CD8-positive, alpha-beta T cell (primary cell): ENCODE measurements at regions of chr12 and their contacts with region 1.

Region 1: DNA sequence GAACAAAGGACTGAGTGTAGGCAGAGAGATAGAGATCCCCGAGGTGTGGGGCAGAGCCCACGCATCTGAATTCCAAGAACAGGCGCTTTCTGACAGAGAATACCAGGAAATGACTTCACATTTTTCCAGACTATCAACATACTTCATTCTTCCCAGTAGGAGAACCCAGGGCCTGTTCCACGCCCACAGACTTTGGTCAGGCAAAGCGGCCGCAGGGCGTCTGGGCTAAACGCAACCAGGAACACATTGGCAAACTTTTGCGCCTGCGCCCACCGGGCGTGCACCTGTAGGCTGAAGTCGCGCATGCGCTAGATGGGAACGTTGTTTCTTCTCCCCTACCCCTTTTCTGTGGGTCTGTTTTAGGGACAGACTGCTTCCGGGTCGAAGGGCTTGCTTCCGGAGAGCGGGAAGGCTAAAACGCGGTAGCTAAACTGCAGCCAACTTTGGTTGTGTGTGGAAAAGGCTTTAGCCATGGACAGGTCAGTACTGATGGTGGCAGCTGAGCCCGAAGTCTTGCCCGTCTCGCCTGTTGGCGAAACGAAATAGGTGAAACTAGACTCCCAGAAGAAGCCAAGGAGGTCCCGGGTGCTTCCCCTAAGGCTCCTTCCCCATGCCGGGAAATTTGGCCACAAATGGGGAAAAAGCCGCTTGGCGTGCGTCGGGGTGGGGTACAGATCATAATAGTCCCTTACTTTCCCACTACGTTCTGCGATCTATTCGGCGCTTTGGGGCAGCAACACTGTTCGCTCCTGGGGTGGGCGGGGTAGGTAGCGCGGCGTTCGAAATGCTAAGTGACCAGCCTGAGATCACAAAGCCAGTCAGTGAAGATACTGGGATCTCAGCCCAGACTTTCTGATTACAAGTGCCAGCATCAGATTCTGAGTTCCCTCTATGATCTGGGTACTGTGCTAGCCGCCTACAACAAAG is at the start of gene NUP107:
- DNase-seq: peak; percentile 95 to 99 (median 98)
- ATAC-seq: peak; percentile 96
- H3K4me3 ChIP-seq: peak within 1 kb of the TSS; percentile 91
- H3K4me3 Mint-ChIP-seq: peak within 1 kb of the TSS; percentile 99
- H3K27ac ChIP-seq: peak within 1 kb of the TSS; percentile 73 to 78
- H3K27ac Mint-ChIP-seq: peak within 1 kb of the TSS; percentile 100
- H3K4me1 ChIP-seq: peaks cover 24% of the 10 kb centered on the region
- H3K4me1 Mint-ChIP-seq: peaks cover 41% of the 10 kb centered on the region
- H3K27me3 ChIP-seq: no peaks in the 10 kb centered on the region
- H3K27me3 Mint-ChIP-seq: no peaks in the 10 kb centered on the region
- CTCF ChIP-seq: no peak
- total RNA-seq, gene NUP107: 40.1 to 45.9 TPM

Region 2: GRCh38 chr12:68294251-68294650 is 392.6 kb before region 1 on chr12:
- CTCF ChIA-PET with region 1: no interaction called
- POLR2A ChIA-PET with region 1: no interaction called
- intact Hi-C with region 1: no loop called
- DNase-seq: no peak
- ATAC-seq: no peak
- H3K4me3 ChIP-seq: no peak overlapping the region
- H3K4me3 Mint-ChIP-seq: no peak overlapping the region
- H3K27ac ChIP-seq: no peak overlapping the region
- H3K27ac Mint-ChIP-seq: no peak overlapping the region
- H3K4me1 ChIP-seq: no peaks in the 10 kb centered on the region
- H3K4me1 Mint-ChIP-seq: peaks cover 9% of the 10 kb centered on the region
- H3K27me3 ChIP-seq: no peaks in the 10 kb centered on the region
- H3K27me3 Mint-ChIP-seq: no peaks in the 10 kb centered on the region
- CTCF ChIP-seq: no peak

Region 3: GRCh38 chr12:68331869-68332727 is 354.8 kb before region 1 on chr12 and contains the start of gene MDM1:
- CTCF ChIA-PET with region 1: no interaction called
- POLR2A ChIA-PET with region 1: no interaction called
- intact Hi-C with region 1: loop called in 1 of 2 experiments (anchors 1 kb)
- DNase-seq: peak; percentile 88 to 99 (median 96)
- ATAC-seq: peak; percentile 95
- H3K4me3 ChIP-seq: peak within 1 kb of the TSS; percentile 56 to 71
- H3K4me3 Mint-ChIP-seq: peak within 1 kb of the TSS; percentile 88
- H3K27ac ChIP-seq: peak within 1 kb of the TSS; percentile 45 to 46
- H3K27ac Mint-ChIP-seq: peak within 1 kb of the TSS; percentile 89
- H3K4me1 ChIP-seq: peaks cover 24% of the 10 kb centered on the region
- H3K4me1 Mint-ChIP-seq: peaks cover 49% of the 10 kb centered on the region
- H3K27me3 ChIP-seq: no peaks in the 10 kb centered on the region
- H3K27me3 Mint-ChIP-seq: no peaks in the 10 kb centered on the region
- CTCF ChIP-seq: no peak
- total RNA-seq, gene MDM1: 10.6 to 12.0 TPM

Region 4: GRCh38 chr12:68358532-68359485 is 328.0 kb before region 1 on chr12:
- CTCF ChIA-PET with region 1: interaction called, 4 read pairs
- POLR2A ChIA-PET with region 1: interaction called, 4 read pairs
- intact Hi-C with region 1: loop called (anchors 1 to 2 kb)
- DNase-seq: peak; percentile 46 to 85 (median 68)
- ATAC-seq: peak; percentile 93
- H3K4me3 ChIP-seq: no peak overlapping the region
- H3K4me3 Mint-ChIP-seq: no peak overlapping the region
- H3K27ac ChIP-seq: no peak overlapping the region
- H3K27ac Mint-ChIP-seq: peak overlapping the region; percentile 29
- H3K4me1 ChIP-seq: peaks cover 14% of the 10 kb centered on the region
- H3K4me1 Mint-ChIP-seq: peaks cover 31% of the 10 kb centered on the region
- H3K27me3 ChIP-seq: no peaks in the 10 kb centered on the region
- H3K27me3 Mint-ChIP-seq: no peaks in the 10 kb centered on the region
- CTCF ChIP-seq: peak; percentile 64

Region 5: DNA sequence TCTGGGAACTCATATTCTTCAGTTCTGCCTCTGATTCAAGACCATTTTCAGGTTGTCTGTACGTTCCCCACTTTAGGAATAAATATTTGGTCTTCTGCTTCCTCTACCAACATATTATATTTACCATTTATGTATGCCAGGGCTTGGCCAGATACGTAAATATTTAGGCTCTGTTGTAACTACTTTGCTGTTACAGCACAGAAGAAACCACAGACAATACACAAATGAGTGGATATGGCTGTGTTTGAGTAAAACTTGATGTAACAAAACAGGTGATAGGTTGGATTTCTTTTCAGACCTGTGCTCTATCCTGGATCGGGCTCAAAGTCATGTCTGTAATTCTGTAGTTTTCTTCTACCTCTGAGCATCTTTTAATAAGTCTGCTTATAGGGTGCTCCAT is 38.7 kb before region 1 on chr12:
- CTCF ChIA-PET with region 1: no interaction called
- POLR2A ChIA-PET with region 1: interaction called, 4 read pairs
- intact Hi-C with region 1: loop called in 1 of 2 experiments (anchors 5 kb)
- DNase-seq: peak in 1 of 9 experiments; percentile 32
- ATAC-seq: peak; percentile 27
- H3K4me3 ChIP-seq: no peak overlapping the region
- H3K4me3 Mint-ChIP-seq: peak overlapping the region; percentile 2
- H3K27ac ChIP-seq: peak overlapping the region in 1 of 2 experiments; percentile 58
- H3K27ac Mint-ChIP-seq: peak overlapping the region; percentile 55
- H3K4me1 ChIP-seq: peaks cover 42% of the 10 kb centered on the region
- H3K4me1 Mint-ChIP-seq: peaks cover 67% of the 10 kb centered on the region
- H3K27me3 ChIP-seq: no peaks in the 10 kb centered on the region
- H3K27me3 Mint-ChIP-seq: no peaks in the 10 kb centered on the region
- CTCF ChIP-seq: no peak

Region 6: DNA sequence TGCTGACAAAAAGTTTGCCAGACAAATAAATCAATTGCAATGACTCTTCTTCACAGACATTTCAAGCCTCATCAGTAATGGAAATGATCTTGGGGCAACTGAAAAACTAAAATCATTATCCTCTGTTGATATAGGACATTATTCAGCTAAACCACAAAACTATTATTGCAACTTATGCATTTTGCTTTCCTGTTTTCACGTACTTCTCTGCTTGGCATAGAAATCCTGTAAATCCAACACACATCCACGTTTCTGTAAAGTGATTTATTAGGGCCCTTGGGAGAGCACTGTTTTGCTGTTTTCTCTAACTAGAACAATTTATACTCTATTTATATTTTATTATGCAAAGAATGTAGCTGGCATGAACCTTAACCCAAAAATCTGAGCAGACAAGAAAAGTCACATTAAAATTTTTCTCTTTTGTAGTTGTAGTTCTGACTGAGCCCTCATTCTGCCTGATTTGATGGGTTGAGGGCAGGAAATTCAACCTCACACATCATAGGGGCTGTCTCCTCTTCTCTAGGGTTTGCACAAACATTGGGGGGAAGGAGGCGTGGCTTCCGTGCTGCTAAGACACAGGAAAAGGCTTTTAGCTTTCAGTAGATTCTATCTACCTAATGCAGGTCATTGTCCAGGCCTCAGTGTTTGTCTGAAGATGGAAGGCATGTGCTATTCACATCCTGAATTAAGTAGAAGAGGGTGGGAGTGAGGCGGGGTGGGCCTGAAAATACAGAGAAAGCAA is 11.6 kb before region 1 on chr12:
- CTCF ChIA-PET with region 1: no interaction called
- POLR2A ChIA-PET with region 1: interaction called, 9 read pairs
- intact Hi-C with region 1: loop called in 1 of 2 experiments (anchors 1 kb)
- DNase-seq: peak; percentile 53 to 93 (median 84)
- ATAC-seq: peak; percentile 99
- H3K4me3 ChIP-seq: peak overlapping the region; percentile 4 to 47
- H3K4me3 Mint-ChIP-seq: peak overlapping the region; percentile 56
- H3K27ac ChIP-seq: peak overlapping the region; percentile 40 to 68
- H3K27ac Mint-ChIP-seq: peak overlapping the region; percentile 86
- H3K4me1 ChIP-seq: peaks cover 47% of the 10 kb centered on the region
- H3K4me1 Mint-ChIP-seq: peaks cover 60% of the 10 kb centered on the region
- H3K27me3 ChIP-seq: no peaks in the 10 kb centered on the region
- H3K27me3 Mint-ChIP-seq: no peaks in the 10 kb centered on the region
- CTCF ChIP-seq: no peak

Region 7: DNA sequence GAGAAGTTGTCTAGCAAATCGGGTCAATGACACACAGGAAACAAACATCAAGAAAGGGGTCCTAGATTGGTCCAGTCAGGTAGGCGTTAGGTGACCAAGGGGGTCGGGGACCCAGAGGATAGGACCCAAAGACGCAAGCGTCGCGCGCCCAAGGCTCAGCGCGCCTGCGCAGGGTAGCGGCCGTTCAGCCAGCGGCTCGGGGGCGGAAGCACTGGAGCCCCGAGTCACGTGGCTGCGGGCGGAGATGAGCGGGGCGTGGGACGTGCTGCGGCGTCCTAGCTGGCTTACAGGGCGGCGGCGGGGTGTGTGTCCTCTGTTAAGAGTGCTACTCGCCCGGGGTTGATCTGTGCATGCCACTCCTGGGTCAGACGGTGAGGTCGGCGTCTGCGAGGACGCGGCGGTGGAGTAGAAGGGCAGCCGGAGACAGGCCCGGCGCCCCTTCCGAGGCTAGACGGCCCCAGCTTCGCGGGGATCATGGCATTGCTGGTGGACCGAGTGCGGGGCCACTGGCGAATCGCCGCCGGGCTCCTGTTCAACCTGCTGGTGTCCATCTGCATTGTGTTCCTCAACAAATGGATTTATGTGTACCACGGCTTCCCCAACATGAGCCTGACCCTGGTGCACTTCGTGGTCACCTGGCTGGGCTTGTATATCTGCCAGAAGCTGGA is 59.2 kb after region 1 on chr12 and contains the start of gene SLC35E3:
- CTCF ChIA-PET with region 1: no interaction called
- POLR2A ChIA-PET with region 1: interaction called, 5 read pairs
- intact Hi-C with region 1: loop called (anchors 2 to 5 kb)
- DNase-seq: peak; percentile 83 to 95 (median 90)
- ATAC-seq: peak; percentile 96
- H3K4me3 ChIP-seq: peak within 1 kb of the TSS; percentile 80 to 96
- H3K4me3 Mint-ChIP-seq: peak within 1 kb of the TSS; percentile 98
- H3K27ac ChIP-seq: peak within 1 kb of the TSS; percentile 73 to 76
- H3K27ac Mint-ChIP-seq: peak within 1 kb of the TSS; percentile 97
- H3K4me1 ChIP-seq: peaks cover 21% of the 10 kb centered on the region
- H3K4me1 Mint-ChIP-seq: peaks cover 48% of the 10 kb centered on the region
- H3K27me3 ChIP-seq: no peaks in the 10 kb centered on the region
- H3K27me3 Mint-ChIP-seq: no peaks in the 10 kb centered on the region
- CTCF ChIP-seq: no peak
- total RNA-seq, gene SLC35E3: 4.0 to 5.7 TPM